Panc1 (cell line): ENCODE measurements at regions of chr11 and their contacts with region 1.

Region 1: DNA sequence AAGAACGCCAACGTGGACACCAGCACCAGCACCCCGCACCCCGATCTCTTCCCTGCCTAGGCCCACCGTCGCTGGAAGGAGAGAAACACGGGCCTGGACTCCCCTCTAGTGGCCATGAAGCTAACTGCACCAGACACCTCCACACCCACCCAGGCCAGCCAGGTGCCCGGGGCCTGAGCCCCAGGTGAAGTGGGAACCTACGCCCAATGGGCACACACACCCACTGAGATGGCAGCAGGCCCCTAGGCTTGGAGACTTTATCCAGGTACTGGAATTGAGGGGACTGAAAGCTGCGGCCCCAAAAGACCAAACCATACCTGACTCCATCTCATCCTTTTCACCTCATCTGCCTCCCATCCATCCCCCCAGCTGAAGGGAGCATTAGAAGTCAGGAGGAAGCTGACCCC is 81.0 kb downstream of the BUD13 start:
- DNase-seq: peak; percentile 30
- ATAC-seq: peak; percentile 77
- H3K4me3 ChIP-seq: no peak overlapping the region
- H3K27ac ChIP-seq: no peak overlapping the region
- H3K4me1 ChIP-seq: no peaks in the 10 kb centered on the region
- H3K27me3 ChIP-seq: no peaks in the 10 kb centered on the region; the same call in 1 of the 2 replicates
- CTCF ChIP-seq: peak; percentile 97

Region 2: GRCh38 chr11:115324581-115325432 is 1367.0 kb before region 1 on chr11:
- CTCF ChIA-PET with region 1: no interaction called
- POLR2A ChIA-PET with region 1: no interaction called
- in situ Hi-C with region 1: no loop called
- intact Hi-C with region 1: loop called (anchors 5 kb)
- DNase-seq: peak; percentile 51
- ATAC-seq: peak; percentile 94
- H3K4me3 ChIP-seq: peak overlapping the region; percentile 14 to 48; a peak in 3 of 4 replicates
- H3K27ac ChIP-seq: no peak overlapping the region
- H3K4me1 ChIP-seq: no peaks in the 10 kb centered on the region
- H3K27me3 ChIP-seq: no peaks in the 10 kb centered on the region
- CTCF ChIP-seq: peak; percentile 85

Region 3: DNA sequence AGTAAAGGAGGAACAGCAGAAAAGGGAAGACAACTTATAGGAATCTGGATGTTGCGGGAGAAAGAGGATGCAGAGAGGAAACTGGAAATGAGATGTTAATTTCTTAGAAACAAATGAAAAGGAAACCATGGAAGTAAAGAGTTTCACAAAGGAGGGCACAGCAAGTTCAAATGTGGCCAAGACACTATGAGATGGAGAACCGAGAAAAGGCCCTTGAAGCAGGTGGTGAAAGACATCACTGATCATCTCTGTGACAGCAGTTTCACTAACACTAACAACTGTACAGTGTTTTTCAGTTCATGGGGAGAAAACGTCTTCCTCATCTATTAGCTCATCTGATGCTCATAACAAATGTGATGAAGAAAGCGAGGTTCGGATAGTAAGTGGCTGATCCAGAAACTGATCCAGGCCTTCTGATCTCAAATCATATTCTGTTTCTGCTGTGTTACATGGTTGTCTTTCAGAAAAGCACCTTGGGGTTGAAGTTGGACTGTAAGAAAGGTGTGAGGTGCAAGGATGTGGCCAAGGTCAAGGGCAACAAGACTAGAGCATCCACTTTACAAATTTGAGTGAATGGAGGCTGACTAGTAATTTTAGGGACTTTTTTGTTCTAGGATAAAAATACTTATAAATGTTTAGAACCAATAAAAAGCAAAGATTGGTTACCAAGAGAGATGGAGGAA is 695.5 kb before region 1 on chr11:
- CTCF ChIA-PET with region 1: no interaction called
- POLR2A ChIA-PET with region 1: no interaction called
- in situ Hi-C with region 1: no loop called
- intact Hi-C with region 1: no loop called
- DNase-seq: no peak
- ATAC-seq: no peak
- H3K4me3 ChIP-seq: no peak overlapping the region
- H3K27ac ChIP-seq: no peak overlapping the region
- H3K4me1 ChIP-seq: no peaks in the 10 kb centered on the region
- H3K27me3 ChIP-seq: no peaks in the 10 kb centered on the region
- CTCF ChIP-seq: no peak

Region 4: DNA sequence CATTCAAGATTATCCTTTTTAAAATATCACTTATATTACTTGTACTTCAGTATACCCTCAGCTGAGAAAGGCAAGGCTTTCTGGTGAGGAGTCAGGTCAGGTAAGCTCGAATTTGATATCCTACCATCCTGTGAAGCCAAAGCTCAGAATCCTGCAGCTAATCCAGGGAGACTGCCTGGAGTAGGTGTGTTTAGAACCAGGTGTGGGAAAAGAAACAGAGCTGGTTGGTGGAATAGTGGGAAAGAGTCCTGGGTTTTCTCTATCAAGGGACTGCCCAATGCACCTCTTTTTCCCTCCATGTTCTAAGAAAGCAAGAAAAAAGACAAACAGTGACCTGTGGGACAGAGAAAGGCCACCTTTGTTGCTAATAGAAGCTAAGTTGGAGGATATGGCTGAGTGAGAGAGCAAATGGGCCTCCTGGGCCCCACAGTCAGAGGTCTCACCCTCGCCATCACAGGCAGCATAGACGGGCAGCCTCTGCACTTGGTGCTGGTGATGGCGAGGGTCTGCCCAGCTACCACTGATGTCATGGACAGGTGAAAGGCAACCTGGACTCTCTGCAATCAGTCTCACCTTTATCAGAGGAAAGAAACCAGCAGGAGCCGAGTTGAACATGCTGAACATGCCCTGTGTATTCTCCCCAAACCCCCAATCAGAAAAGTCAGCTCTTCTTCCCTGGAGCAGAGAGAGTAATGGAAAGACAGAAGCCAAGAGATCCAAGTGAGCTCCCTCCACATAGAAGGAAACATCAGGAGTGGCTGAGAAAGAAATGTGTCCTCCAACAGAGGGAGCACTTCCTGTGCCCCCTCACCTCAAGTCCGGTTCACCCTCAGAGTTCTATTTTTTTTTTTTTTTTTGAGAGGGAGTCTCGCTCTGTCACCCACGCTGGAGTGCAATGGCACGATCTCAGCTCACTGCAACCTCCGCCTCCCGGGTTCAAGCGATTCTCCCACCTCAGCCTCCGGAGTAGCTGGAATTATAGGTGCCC is 410.3 kb before region 1 on chr11:
- CTCF ChIA-PET with region 1: interaction called, 11 read pairs
- POLR2A ChIA-PET with region 1: no interaction called
- in situ Hi-C with region 1: no loop called
- intact Hi-C with region 1: no loop called
- DNase-seq: no peak
- ATAC-seq: no peak
- H3K4me3 ChIP-seq: no peak overlapping the region
- H3K27ac ChIP-seq: no peak overlapping the region
- H3K4me1 ChIP-seq: 0 out of 2 replicates have a peak, but pooled peaks cover 1% of the 10 kb centered on the region
- H3K27me3 ChIP-seq: peaks cover 2% of the 10 kb centered on the region
- CTCF ChIP-seq: peak; percentile 57

Region 5: GRCh38 chr11:116454020-116454645 is 237.6 kb before region 1 on chr11:
- CTCF ChIA-PET with region 1: no interaction called
- POLR2A ChIA-PET with region 1: no interaction called
- in situ Hi-C with region 1: no loop called
- intact Hi-C with region 1: loop called (anchors 2 kb)
- DNase-seq: peak; percentile 25
- ATAC-seq: peak; percentile 80
- H3K4me3 ChIP-seq: no peak overlapping the region
- H3K27ac ChIP-seq: no peak overlapping the region
- H3K4me1 ChIP-seq: no peaks in the 10 kb centered on the region
- H3K27me3 ChIP-seq: peaks cover 5% of the 10 kb centered on the region; the same call in 1 of the 2 replicates
- CTCF ChIP-seq: peak; percentile 78

Region 6: DNA sequence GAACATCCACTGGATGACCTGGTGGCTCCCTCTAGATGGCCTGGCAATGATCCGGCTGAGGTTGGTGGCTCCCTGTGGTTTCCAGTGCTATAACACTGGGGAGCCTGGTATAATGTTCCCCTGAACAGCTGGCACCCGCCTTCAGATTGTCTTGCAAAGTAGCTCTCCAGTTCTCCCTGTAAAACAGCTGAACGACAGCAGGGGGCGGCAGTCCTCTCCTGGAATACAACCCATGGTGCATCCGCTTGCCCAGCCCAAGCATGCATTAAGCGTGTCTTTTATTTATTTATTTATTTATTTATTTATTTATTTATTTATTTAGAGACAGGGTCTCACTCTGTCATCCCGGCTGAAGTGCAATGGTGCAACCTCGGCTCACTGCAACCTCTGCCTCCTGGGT is 177.9 kb before region 1 on chr11:
- CTCF ChIA-PET with region 1: interaction called, 7 read pairs
- POLR2A ChIA-PET with region 1: no interaction called
- in situ Hi-C with region 1: no loop called
- intact Hi-C with region 1: loop called (anchors 2 kb)
- DNase-seq: no peak
- ATAC-seq: peak; percentile 72; the same call in 1 of the 2 replicates
- H3K4me3 ChIP-seq: no peak overlapping the region
- H3K27ac ChIP-seq: no peak overlapping the region
- H3K4me1 ChIP-seq: no peaks in the 10 kb centered on the region
- H3K27me3 ChIP-seq: no peaks in the 10 kb centered on the region; the same call in 1 of the 2 replicates
- CTCF ChIP-seq: peak; percentile 31; the same call in 1 of the 2 replicates

Region 7: GRCh38 chr11:116631201-116631600 is 60.6 kb before region 1 on chr11:
- CTCF ChIA-PET with region 1: no interaction called
- POLR2A ChIA-PET with region 1: no interaction called
- in situ Hi-C with region 1: no loop called
- intact Hi-C with region 1: no loop called
- DNase-seq: no peak
- ATAC-seq: no peak
- H3K4me3 ChIP-seq: no peak overlapping the region
- H3K27ac ChIP-seq: no peak overlapping the region
- H3K4me1 ChIP-seq: no peaks in the 10 kb centered on the region
- H3K27me3 ChIP-seq: peaks cover 6% of the 10 kb centered on the region; the same call in 1 of the 2 replicates
- CTCF ChIP-seq: no peak